PC-3 (cell line): ENCODE measurements at regions of chr11 and their contacts with region 1.

Region 1: GRCh38 chr11:107840129-107840484 is 18.5 kb downstream of the SLC35F2 start:
- DNase-seq: no peak
- ATAC-seq: peak; percentile 41
- H3K4me3 ChIP-seq: peak overlapping the region; percentile 41
- H3K27ac ChIP-seq: peak overlapping the region; percentile 76
- H3K4me1 ChIP-seq: peaks cover 66% of the 10 kb centered on the region
- H3K27me3 ChIP-seq: no peaks in the 10 kb centered on the region
- CTCF ChIP-seq: no peak

Region 2: GRCh38 chr11:107705027-107705426 is 135.1 kb before region 1 on chr11:
- CTCF ChIA-PET with region 1: no interaction called
- POLR2A ChIA-PET with region 1: no interaction called
- intact Hi-C with region 1: no loop called
- DNase-seq: peak; percentile 98
- ATAC-seq: peak; percentile 93
- H3K4me3 ChIP-seq: no peak overlapping the region
- H3K27ac ChIP-seq: peak overlapping the region; percentile 63
- H3K4me1 ChIP-seq: peaks cover 32% of the 10 kb centered on the region
- H3K27me3 ChIP-seq: 0 out of 2 replicates have a peak, but pooled peaks cover 5% of the 10 kb centered on the region
- CTCF ChIP-seq: no peak

Region 3: GRCh38 chr11:107882095-107882820 is 42.2 kb after region 1 on chr11:
- CTCF ChIA-PET with region 1: no interaction called
- POLR2A ChIA-PET with region 1: no interaction called
- intact Hi-C with region 1: no loop called
- DNase-seq: peak; percentile 19
- ATAC-seq: no peak
- H3K4me3 ChIP-seq: no peak overlapping the region
- H3K27ac ChIP-seq: no peak overlapping the region
- H3K4me1 ChIP-seq: 0 out of 2 replicates have a peak, but pooled peaks cover 4% of the 10 kb centered on the region
- H3K27me3 ChIP-seq: no peaks in the 10 kb centered on the region
- CTCF ChIP-seq: no peak

Region 4: DNA sequence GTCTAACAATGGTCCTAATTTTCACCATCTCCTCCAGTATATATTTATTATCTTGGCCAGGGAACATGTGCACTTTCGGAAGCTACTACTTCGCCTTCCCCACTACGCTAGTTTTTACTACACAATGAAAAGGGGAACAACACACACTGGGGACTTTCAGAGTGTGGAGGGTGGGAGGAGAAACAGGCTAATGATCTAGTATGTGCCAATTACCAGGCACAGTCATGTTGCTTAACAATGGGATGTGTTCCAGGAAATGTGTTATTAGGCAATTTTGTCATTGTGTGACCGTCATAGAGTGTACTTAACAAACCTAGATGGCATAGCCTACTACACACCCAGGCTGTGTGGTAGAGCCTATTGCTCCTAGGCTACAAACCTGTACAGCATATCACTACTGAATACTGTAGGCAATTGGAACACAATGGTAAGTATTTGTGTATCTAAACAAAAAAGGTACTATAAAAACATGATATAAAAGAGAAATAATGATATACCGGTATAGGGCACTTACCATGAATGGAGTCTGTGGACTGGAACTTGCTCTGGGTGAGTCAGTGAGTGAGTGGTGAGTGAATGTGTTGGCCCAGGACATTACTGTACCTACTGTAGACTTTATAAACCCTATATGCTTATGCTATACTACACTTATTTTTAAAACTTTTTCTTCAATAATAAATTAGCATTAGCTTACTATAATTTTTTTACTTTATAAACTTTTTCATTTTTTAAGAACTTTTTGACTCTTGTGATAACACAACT is 148.5 kb after region 1 on chr11:
- CTCF ChIA-PET with region 1: no interaction called
- POLR2A ChIA-PET with region 1: interaction called, 13 read pairs
- intact Hi-C with region 1: no loop called
- DNase-seq: peak; percentile 23
- ATAC-seq: peak; percentile 27
- H3K4me3 ChIP-seq: no peak overlapping the region
- H3K27ac ChIP-seq: no peak overlapping the region
- H3K4me1 ChIP-seq: no peaks in the 10 kb centered on the region
- H3K27me3 ChIP-seq: peaks cover 5% of the 10 kb centered on the region; the same call in 1 of the 2 replicates
- CTCF ChIP-seq: no peak

Region 5: GRCh38 chr11:108453207-108453835 is 613.2 kb after region 1 on chr11:
- CTCF ChIA-PET with region 1: interaction called, 22 read pairs
- POLR2A ChIA-PET with region 1: no interaction called
- intact Hi-C with region 1: no loop called
- DNase-seq: no peak
- ATAC-seq: no peak
- H3K4me3 ChIP-seq: no peak overlapping the region
- H3K27ac ChIP-seq: no peak overlapping the region
- H3K4me1 ChIP-seq: no peaks in the 10 kb centered on the region
- H3K27me3 ChIP-seq: no peaks in the 10 kb centered on the region
- CTCF ChIP-seq: no peak